ENCODE measurements at regions of chr12 and their contacts with region 1.

Region 1: GRCh38 chr12:8065991-8066594 is at the start of gene C3AR1:
- DNase-seq: peak; percentile 74
- H3K4me3 ChIP-seq: no peak within 1 kb of the TSS
- H3K27ac ChIP-seq: peak within 1 kb of the TSS; percentile 15
- H3K4me1 ChIP-seq: no peaks in the 10 kb centered on the region
- H3K27me3 ChIP-seq: no peaks in the 10 kb centered on the region
- CTCF ChIP-seq: no peak
- total RNA-seq, gene C3AR1: 1.3 and 3.5 TPM in 2 replicates

Region 2: DNA sequence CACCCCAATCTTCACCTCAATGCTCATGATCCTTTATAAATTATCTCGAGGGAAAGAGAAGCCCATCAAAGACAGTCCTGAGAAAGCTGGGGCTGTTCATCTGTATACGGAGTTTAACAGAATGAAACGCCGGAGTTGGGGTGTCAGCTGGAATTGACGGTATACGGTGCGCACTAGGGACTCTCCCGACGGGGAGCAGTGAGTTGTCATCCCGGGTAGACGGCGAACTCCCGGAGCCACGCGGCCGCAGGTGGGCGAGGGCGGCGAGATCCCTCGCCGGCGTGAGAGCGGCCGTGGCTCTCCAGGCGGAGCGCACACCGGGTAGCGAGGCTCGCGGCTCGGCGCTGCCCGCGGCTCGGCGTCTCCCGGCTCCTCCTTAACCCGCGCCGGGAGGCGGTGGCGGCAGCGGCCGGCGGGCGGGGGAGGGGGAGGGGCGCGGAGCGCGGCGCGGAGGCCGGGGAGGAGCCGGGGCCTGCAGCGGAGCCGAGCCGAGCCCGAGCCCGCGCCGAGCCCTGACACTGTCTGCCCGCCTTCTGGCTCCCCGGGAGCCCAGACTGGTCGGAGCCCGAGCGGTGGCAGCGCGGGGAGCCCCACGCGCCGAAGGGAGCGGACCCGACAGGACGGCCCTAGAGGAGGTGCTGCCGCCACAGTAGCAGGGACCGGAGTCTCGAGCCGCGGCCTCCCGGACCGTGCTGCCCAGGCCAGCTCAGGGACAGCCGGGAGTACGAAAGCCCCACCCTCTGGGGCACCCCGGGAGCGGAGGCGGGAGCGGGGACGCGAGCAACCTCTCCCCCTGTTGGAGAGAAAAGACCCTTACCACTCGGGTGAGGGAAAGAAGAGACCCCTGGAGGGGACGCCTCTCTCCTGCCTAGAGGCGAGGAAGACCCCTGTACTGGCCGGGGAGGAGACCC is 33.6 kb before region 1 on chr12 and contains the start of gene FOXJ2:
- CTCF ChIA-PET with region 1: no interaction called
- POLR2A ChIA-PET with region 1: no interaction called
- intact Hi-C with region 1: loop called (anchors 2 kb)
- DNase-seq: peak; percentile 80
- H3K4me3 ChIP-seq: peak within 1 kb of the TSS; percentile 96
- H3K27ac ChIP-seq: peak within 1 kb of the TSS; percentile 95
- H3K4me1 ChIP-seq: peaks cover 19% of the 10 kb centered on the region
- H3K27me3 ChIP-seq: no peaks in the 10 kb centered on the region
- CTCF ChIP-seq: peak; percentile 24; the same call in 1 of the 2 replicates
- total RNA-seq, gene FOXJ2: 13.9 and 14.6 TPM in 2 replicates

Measured in A673 (cell line).